ENCODE measurements at regions of chr3 and their contacts with region 1.

Region 1: GRCh38 chr3:150850191-150850590 is 55.0 kb downstream of the MINDY4B start:
- DNase-seq: no peak
- ATAC-seq: no peak
- H3K4me3 ChIP-seq: no peak overlapping the region
- H3K27ac ChIP-seq: no peak overlapping the region
- H3K4me1 ChIP-seq: no peaks in the 10 kb centered on the region
- H3K27me3 ChIP-seq: no peaks in the 10 kb centered on the region; the same call in 1 of the 2 replicates
- CTCF ChIP-seq: no peak

Region 2: GRCh38 chr3:150170852-150171520 is 679.2 kb before region 1 on chr3:
- CTCF ChIA-PET with region 1: no interaction called
- POLR2A ChIA-PET with region 1: no interaction called
- in situ Hi-C with region 1: no loop called
- intact Hi-C with region 1: no loop called
- DNase-seq: no peak
- ATAC-seq: peak; percentile 45; the same call in 1 of the 2 replicates
- H3K4me3 ChIP-seq: no peak overlapping the region
- H3K27ac ChIP-seq: no peak overlapping the region
- H3K4me1 ChIP-seq: no peaks in the 10 kb centered on the region
- H3K27me3 ChIP-seq: no peaks in the 10 kb centered on the region
- CTCF ChIP-seq: no peak

Region 3: DNA sequence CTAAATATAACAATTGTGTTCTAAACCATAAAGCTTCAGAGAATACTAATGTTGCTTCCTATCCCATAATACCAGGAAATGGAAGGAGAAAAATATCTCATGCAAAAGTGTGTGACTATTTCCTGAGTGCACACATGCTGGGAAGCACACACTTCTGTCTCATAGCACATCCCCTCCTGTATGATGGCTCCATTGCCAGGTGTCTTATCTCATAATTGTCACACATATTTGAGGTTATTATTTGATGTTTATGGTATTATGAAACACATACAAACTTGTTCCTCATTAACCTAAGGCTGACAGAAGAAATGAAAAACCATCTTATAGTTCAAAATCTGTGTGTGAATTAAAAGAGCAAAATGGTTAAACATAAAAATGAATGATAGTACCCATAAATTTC is 369.3 kb before region 1 on chr3:
- CTCF ChIA-PET with region 1: no interaction called
- POLR2A ChIA-PET with region 1: no interaction called
- in situ Hi-C with region 1: no loop called
- intact Hi-C with region 1: no loop called
- DNase-seq: no peak
- ATAC-seq: no peak
- H3K4me3 ChIP-seq: no peak overlapping the region
- H3K27ac ChIP-seq: no peak overlapping the region
- H3K4me1 ChIP-seq: no peaks in the 10 kb centered on the region
- H3K27me3 ChIP-seq: no peaks in the 10 kb centered on the region
- CTCF ChIP-seq: no peak

Region 4: DNA sequence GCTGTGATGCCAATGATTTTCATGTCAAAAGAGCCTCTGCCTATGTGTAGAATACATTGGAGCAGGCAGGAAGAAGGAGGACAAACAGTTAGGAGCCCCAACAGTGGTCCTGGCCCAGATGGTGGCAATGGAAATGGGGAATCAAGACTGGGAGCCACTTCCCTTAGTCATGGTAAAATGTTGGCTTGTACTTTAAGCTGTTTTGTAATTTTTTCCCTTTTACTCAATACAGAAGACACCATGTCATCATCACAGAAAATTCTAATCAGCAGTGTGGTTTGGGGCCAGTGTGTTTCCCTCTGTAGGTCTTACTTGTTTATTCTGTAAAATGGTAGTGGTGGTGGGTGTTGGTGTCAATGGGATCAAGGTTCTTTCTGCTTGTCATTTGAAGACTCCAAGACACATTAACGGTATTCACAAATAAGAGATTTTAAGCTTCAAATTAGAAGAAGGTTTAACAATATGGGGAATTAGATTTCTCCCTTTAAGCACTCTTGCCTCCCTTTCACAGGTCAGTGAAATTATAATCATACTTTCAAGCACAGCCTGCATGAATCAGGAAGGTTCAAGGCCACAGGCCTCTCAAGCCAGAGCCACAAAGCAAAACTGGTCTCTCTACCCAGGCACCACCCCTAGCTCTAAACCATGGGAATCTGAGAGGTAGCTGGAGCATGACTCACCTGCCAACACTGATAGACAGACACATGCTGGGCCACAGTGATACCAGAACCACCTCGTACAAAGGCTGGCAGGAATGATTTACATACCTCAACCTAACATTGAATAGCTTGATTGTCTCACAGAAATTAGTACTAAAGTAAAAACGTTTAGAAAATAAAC is 112.1 kb before region 1 on chr3:
- CTCF ChIA-PET with region 1: interaction called, 10 read pairs
- POLR2A ChIA-PET with region 1: no interaction called
- in situ Hi-C with region 1: no loop called
- intact Hi-C with region 1: no loop called
- DNase-seq: no peak
- ATAC-seq: no peak
- H3K4me3 ChIP-seq: no peak overlapping the region
- H3K27ac ChIP-seq: no peak overlapping the region
- H3K4me1 ChIP-seq: no peaks in the 10 kb centered on the region
- H3K27me3 ChIP-seq: no peaks in the 10 kb centered on the region
- CTCF ChIP-seq: no peak